RWPE1 (cell line): ENCODE measurements at regions of chr10 and their contacts with region 1.

Region 1: GRCh38 chr10:97701438-97702069 is 12.0 kb upstream of the MARVELD1 start:
- DNase-seq: peak; percentile 78
- H3K27ac ChIP-seq: peak overlapping the region; percentile 58
- CTCF ChIP-seq: peak; percentile 88

Region 2: DNA sequence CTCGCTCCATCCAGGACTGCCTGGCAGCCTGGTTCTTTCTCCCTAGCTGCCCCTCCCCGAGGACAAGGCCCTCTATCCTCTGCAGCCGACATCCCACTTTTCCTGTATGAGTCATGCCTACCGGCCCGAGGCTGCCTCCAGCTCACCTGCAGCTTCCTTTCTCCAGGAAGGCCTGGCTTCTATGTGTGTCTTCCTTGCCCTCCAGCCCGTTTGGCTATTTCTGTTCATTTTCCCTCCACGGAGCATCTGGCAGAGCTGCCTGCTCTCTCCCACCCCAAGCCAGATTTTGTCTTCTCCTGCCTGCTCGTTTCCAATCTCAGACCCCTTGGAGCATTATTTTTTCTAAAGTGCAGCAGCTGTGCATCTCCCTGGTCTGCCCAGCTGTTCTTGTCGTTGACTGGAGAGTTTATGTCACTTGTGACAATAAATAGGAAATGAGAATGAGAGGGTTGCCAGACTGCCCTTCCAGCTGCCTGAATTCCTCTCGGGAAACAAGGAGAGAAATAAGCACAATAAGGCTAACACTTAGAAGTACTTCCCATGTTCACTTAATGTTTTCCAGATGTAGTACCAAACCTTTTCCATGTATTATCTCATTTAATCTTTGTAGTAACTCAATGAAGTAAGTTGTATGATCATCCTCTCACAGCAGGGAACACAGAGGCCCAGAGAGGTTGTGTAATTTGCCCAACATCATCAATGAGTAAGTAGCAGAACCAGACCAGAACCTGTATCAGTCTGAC is 183.1 kb before region 1 on chr10:
- CTCF ChIA-PET with region 1: no interaction called
- POLR2A ChIA-PET with region 1: no interaction called
- DNase-seq: peak; percentile 87
- H3K27ac ChIP-seq: peak overlapping the region; percentile 80
- CTCF ChIP-seq: no peak

Region 3: GRCh38 chr10:97686962-97687784 is 14.4 kb before region 1 on chr10 and contains the start of gene AVPI1:
- CTCF ChIA-PET with region 1: interaction called, 13 read pairs
- POLR2A ChIA-PET with region 1: interaction called, 5 read pairs
- DNase-seq: peak; percentile 99
- H3K27ac ChIP-seq: peak within 1 kb of the TSS; percentile 96
- CTCF ChIP-seq: no peak

Region 4: DNA sequence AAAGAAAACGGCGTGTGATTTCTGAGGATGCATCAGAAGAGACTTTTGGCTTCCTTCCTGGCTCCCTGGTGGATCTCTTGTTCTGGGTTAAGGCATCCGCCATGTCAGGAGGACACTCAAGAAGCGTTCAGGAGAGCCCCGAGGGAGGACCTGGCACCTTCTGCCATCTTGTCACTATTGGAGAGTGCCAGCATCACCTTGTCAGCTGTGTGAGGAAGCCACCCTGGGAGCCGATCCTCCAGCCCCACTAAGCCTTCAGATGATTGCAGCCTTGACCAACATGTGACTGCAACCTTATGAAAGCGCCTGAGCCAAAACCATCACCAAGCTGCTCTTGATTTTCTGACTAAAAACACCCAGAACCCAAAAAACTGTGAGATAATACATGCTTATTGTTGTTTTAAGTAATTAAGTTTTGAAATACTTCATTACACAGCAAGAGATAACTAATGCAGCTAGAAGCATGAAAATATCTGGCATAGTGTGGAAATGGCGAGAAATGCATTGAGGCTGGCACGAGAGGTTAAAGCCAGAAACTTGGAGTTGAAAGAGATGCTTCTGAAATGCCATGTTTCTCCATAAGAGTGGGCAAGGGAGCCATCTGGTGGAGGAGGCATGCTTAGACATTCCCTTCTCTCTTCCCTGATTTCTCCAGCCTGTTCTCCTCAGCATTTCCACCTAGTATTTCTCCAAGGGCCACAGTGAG is 29.9 kb after region 1 on chr10:
- CTCF ChIA-PET with region 1: interaction called, 51 read pairs
- POLR2A ChIA-PET with region 1: interaction called, 6 read pairs
- DNase-seq: peak; percentile 73
- H3K27ac ChIP-seq: peak overlapping the region; percentile 45
- CTCF ChIP-seq: peak; percentile 86

Region 5: GRCh38 chr10:97771055-97771811 is 69.7 kb after region 1 on chr10:
- CTCF ChIA-PET with region 1: no interaction called
- POLR2A ChIA-PET with region 1: no interaction called
- DNase-seq: peak; percentile 50
- H3K27ac ChIP-seq: no peak overlapping the region
- CTCF ChIP-seq: no peak